IMR-90 (cell line): ENCODE measurements at regions of chr17 and their contacts with region 1.

Region 1: DNA sequence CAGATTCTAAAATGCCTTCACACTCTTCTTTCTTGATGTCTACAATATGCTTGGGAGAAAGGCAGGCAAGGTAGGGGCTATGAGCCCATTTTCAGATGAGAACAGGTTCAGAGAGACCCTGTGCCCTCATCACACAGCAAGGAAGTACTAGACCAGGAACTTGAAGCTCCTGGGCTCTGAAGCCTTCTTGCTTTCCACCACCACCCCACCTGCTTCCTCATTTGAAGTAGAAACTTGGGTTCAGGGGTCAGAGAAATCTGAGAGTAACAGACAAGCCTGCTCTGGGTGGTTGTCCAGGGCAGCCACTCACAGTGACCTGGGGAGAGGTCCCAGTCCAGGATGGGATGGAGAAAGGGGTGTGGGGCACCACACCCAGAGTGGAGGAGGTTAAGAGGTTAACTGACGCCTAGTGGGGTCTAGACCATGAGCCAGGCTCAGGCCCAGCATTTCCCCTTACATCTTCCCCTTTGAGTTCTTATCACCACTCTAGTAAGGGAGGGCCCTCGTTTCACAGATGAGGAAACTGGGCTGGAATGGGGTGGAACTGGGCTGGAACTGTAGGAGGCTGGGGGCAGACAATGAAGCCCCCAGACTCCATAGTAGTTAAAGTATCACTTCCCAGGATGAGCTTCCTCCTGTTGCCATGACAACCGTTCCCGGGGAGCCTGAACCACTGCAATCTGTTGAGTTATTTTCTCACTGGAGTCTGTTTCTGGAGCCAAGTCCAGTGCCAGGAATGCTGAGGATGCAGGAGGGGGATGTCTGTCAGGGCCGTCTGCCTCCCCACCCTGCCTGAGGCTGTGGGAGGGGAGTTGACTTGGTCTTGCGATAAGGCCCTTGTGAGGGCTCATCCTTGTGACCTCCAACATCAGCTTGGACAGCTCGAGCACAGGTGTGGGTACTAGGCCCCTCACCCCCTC is 16.2 kb upstream of the PHF12 start:
- DNase-seq: no peak
- ATAC-seq: no peak
- H3K4me3 ChIP-seq: no peak overlapping the region
- H3K27ac ChIP-seq: no peak overlapping the region
- H3K4me1 ChIP-seq: peaks cover 4% of the 10 kb centered on the region; the same call in 1 of the 2 replicates
- H3K27me3 ChIP-seq: peaks cover 27% of the 10 kb centered on the region
- CTCF ChIP-seq: no peak
- POLR2A ChIP-seq: no peak
- RAD21 ChIP-seq: no peak

Region 2: DNA sequence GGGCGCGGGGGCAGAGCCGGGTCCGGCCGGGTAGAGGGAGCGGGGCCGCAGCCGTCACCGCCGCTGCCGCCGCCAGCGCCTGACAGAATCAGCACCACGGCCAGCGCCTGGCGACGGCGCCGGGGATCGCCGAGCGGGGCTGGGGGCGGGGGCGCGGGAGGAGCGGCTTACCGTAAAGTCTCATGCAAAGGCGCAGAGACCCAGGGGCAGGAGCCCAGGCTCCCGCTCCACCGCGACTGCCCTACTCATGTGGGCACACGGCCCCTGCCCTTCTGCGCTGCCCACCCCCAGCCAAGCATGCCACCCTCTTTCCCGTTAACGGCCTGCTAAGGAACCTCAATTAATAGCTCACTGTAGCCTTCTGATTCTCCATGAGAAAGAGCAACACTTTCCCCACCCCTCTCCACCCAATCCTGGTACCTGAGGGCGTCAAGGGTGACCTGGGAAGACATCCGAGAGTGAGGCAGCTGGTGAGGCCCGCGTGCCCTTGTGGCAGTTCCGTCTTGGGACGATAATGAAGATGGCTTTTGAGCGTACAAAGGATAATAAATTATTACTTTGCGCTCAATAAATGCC is 38.5 kb after region 1 on chr17 and contains the start of gene SEZ6:
- CTCF ChIA-PET with region 1: no interaction called
- POLR2A ChIA-PET with region 1: no interaction called
- dilution Hi-C with region 1: no loop called
- in situ Hi-C with region 1: no loop called
- intact Hi-C with region 1: loop called (anchors 2 kb)
- DNase-seq: peak; percentile 48
- ATAC-seq: peak; percentile 99
- H3K4me3 ChIP-seq: no peak within 1 kb of the TSS
- H3K27ac ChIP-seq: no peak within 1 kb of the TSS
- H3K4me1 ChIP-seq: peaks cover 3% of the 10 kb centered on the region
- H3K27me3 ChIP-seq: peaks cover 82% of the 10 kb centered on the region
- CTCF ChIP-seq: no peak
- POLR2A ChIP-seq: no peak
- RAD21 ChIP-seq: no peak
- total RNA-seq, gene SEZ6: not detected in 2 replicates

Region 3: GRCh38 chr17:29042679-29043538 is 75.4 kb after region 1 on chr17 and contains the start of gene PIPOX:
- CTCF ChIA-PET with region 1: no interaction called
- POLR2A ChIA-PET with region 1: no interaction called
- dilution Hi-C with region 1: no loop called
- in situ Hi-C with region 1: no loop called
- intact Hi-C with region 1: loop called (anchors 10 kb)
- DNase-seq: peak; percentile 15
- ATAC-seq: no peak; the same call in 1 of the 2 replicates
- H3K4me3 ChIP-seq: no peak within 1 kb of the TSS
- H3K27ac ChIP-seq: no peak within 1 kb of the TSS
- H3K4me1 ChIP-seq: no peaks in the 10 kb centered on the region
- H3K27me3 ChIP-seq: peaks cover 46% of the 10 kb centered on the region
- CTCF ChIP-seq: no peak
- POLR2A ChIP-seq: no peak
- RAD21 ChIP-seq: no peak
- total RNA-seq, gene PIPOX: 1.1 and 1.3 TPM in 2 replicates

Region 4: DNA sequence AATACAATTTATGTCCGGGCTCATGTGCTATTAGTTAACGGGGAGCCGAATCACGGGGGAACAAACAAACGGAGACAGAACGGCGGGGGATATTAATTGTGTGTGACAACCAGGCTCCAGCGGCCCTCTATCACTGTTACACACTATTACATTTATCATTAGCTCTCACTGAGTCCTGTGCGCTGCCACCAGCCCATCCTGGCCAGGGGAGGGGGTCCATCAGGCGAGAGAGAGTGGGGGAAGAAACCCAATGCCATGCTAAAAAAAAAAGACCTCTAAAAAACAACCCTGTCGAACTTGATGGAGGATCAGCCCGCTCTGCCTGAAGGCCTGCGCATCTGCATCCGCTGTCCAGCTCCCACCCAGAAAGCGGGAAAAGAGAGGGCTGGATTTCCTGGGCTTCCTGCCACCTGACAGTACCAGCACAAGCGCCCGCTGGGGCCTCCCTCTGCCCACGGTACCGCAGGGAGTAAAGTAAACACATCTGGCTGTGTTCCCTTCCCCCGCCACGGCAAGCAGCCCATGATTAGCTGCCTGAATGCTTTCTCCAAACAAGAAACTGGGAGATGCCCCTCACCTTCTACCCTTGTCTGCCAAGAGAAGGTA is 117.2 kb after region 1 on chr17:
- CTCF ChIA-PET with region 1: no interaction called
- POLR2A ChIA-PET with region 1: no interaction called
- dilution Hi-C with region 1: no loop called
- in situ Hi-C with region 1: no loop called
- intact Hi-C with region 1: no loop called
- DNase-seq: peak; percentile 55
- ATAC-seq: peak; percentile 59
- H3K4me3 ChIP-seq: no peak overlapping the region
- H3K27ac ChIP-seq: no peak overlapping the region
- H3K4me1 ChIP-seq: no peaks in the 10 kb centered on the region; the same call in 1 of the 2 replicates
- H3K27me3 ChIP-seq: no peaks in the 10 kb centered on the region
- CTCF ChIP-seq: no peak
- POLR2A ChIP-seq: no peak
- RAD21 ChIP-seq: no peak

Region 5: DNA sequence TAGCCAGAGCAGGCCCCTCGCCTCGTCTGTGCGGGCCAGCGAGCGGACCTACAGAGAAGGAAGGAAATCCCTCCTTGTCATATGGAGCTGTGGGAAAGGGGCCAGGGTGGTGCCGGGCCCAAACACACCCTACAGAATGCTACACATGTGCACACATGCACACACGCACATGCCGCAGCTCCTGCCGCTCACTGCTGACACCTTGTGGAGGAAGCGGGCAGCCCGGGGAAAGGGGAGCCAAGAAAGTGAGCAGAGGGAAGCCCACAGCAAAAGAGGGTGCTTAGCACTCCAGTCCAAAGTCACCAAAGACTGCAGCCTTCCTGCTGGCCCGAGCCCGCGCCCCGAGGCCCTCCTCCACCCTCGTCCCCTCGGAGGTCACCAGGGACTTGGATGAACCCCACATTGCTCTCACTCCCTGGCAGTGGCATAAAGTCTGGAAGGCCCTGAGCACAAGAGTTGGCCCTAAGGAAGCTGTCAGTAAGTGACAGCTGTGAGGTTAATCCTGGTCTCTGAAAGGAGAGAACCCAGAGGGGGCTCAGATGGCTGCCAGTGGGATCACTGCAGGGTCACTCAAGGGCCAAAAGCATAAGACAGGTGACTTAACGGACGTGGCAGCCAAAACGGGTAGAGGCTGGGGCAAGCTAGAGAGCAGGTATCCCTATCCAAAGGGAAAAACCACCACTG is 144.5 kb after region 1 on chr17:
- CTCF ChIA-PET with region 1: interaction called, 42 read pairs
- POLR2A ChIA-PET with region 1: no interaction called
- dilution Hi-C with region 1: no loop called
- in situ Hi-C with region 1: loop called (anchors 5 kb)
- intact Hi-C with region 1: loop called (anchors 1 kb)
- DNase-seq: peak; percentile 55
- ATAC-seq: peak; percentile 88
- H3K4me3 ChIP-seq: no peak overlapping the region
- H3K27ac ChIP-seq: no peak overlapping the region
- H3K4me1 ChIP-seq: peaks cover 5% of the 10 kb centered on the region
- H3K27me3 ChIP-seq: no peaks in the 10 kb centered on the region
- CTCF ChIP-seq: peak; percentile 85
- POLR2A ChIP-seq: no peak
- RAD21 ChIP-seq: peak; percentile 77

Region 6: DNA sequence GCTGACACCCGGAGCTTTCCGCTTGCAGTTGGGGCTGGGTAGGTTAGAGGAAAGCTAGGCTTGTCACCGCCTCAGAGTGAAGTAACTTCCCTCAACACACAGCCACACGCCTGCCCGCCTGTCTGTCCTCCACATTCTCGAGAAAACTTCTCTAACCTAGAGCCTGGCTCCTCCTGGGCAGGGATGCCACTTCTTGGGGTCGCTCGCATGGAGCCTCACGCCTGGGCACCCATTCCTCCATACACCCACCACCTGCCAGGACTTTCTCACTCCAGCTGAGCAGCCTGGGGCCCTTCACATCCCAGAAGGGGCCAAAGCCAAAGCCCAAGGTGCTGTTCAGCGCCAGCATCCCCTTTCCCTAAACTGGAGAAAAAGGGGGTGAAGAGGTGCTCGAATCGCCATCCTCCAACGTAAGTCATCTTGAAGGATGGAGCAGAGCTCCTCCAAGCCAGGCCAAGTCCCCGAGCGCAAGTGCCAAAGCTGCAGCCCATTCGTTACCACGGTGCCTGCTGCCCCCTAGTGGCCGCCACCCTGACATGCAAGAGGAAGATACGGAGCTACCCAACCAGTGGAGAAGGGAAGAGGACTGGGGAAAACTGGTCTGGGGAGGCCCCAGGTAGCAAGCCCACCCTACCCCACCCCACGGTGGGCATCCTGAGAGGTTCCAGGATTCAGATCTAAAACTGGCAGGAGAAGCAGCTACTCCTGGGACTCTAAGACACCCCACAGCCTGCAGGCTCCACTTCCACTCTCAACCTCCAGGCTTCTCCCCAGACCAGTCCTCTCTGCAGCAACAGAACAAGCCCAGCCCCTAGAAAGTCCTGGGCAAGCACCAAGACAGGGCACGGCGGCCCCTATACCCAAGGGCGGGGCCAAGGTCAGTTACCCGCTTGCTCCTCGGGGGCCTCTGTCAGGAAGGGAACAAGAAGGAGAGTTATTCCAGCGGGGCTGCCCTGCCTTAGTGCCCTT is 149.6 kb after region 1 on chr17:
- CTCF ChIA-PET with region 1: interaction called, 42 read pairs
- POLR2A ChIA-PET with region 1: no interaction called
- dilution Hi-C with region 1: no loop called
- in situ Hi-C with region 1: no loop called
- intact Hi-C with region 1: no loop called
- DNase-seq: peak; percentile 47
- ATAC-seq: peak; percentile 78
- H3K4me3 ChIP-seq: no peak overlapping the region
- H3K27ac ChIP-seq: no peak overlapping the region
- H3K4me1 ChIP-seq: no peaks in the 10 kb centered on the region
- H3K27me3 ChIP-seq: no peaks in the 10 kb centered on the region
- CTCF ChIP-seq: peak; percentile 77
- POLR2A ChIP-seq: no peak
- RAD21 ChIP-seq: peak; percentile 70